Activated CD4-positive, alpha-beta memory T cell treated with anti-CD3 and anti-CD28 coated beads for 36 hours (primary cell): ENCODE measurements at regions of chr9 and their contacts with region 1.

Region 1: DNA sequence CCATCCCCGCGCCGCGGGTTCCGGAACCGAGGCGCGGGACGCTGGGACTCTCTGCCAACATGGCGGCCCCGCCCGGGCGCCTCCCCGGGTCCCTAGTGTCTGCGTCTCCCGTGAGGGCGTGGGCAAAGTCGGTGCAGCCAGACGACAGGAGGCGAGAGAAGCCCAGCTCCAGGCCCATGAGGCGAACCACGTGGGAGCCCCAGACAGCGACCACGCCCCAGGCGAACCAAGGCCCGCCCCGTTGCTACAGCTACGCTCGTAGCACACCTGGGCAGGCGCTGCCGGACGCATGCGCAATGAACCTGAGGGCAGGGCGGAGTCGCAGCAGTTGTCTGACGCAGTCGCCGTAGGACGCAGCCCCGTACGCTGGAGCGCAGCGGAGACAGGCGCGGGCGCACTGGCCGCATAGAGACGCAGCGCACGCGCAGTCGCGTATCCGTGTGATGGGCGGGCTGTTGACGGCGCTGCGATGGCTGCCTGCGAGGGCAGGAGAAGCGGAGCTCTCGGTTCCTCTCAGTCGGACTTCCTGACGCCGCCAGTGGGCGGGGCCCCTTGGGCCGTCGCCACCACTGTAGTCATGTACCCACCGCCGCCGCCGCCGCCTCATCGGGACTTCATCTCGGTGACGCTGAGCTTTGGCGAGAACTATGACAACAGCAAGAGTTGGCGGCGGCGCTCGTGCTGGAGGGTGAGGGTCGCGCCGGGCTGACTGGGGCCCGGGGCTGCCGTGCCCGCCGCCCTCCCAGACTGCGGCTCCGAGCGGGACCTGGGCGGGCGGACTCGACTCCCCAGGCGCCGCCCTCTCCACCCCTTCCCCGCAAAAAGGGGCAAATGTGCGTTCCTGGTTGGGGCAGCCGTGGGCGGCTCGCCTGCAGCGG is at the start of gene MAN1B1:
- DNase-seq: peak; percentile 100
- H3K4me3 Mint-ChIP-seq: peak within 1 kb of the TSS; percentile 88
- H3K27ac Mint-ChIP-seq: peak within 1 kb of the TSS; percentile 92
- H3K4me1 Mint-ChIP-seq: peaks cover 40% of the 10 kb centered on the region
- H3K27me3 Mint-ChIP-seq: no peaks in the 10 kb centered on the region
- total RNA-seq, gene MAN1B1: 32.9 to 33.1 TPM

Region 2: GRCh38 chr9:136885950-136886578 is 200.7 kb before region 1 on chr9 and contains the start of gene TRAF2:
- CTCF ChIA-PET with region 1: no interaction called
- POLR2A ChIA-PET with region 1: interaction called, 4 read pairs
- intact Hi-C with region 1: loop called (anchors 2 kb)
- DNase-seq: peak; percentile 99
- H3K4me3 Mint-ChIP-seq: peak within 1 kb of the TSS; percentile 91
- H3K27ac Mint-ChIP-seq: peak within 1 kb of the TSS; percentile 89
- H3K4me1 Mint-ChIP-seq: peaks cover 39% of the 10 kb centered on the region
- H3K27me3 Mint-ChIP-seq: no peaks in the 10 kb centered on the region
- total RNA-seq, gene TRAF2: 40.0 to 41.4 TPM

Region 3: DNA sequence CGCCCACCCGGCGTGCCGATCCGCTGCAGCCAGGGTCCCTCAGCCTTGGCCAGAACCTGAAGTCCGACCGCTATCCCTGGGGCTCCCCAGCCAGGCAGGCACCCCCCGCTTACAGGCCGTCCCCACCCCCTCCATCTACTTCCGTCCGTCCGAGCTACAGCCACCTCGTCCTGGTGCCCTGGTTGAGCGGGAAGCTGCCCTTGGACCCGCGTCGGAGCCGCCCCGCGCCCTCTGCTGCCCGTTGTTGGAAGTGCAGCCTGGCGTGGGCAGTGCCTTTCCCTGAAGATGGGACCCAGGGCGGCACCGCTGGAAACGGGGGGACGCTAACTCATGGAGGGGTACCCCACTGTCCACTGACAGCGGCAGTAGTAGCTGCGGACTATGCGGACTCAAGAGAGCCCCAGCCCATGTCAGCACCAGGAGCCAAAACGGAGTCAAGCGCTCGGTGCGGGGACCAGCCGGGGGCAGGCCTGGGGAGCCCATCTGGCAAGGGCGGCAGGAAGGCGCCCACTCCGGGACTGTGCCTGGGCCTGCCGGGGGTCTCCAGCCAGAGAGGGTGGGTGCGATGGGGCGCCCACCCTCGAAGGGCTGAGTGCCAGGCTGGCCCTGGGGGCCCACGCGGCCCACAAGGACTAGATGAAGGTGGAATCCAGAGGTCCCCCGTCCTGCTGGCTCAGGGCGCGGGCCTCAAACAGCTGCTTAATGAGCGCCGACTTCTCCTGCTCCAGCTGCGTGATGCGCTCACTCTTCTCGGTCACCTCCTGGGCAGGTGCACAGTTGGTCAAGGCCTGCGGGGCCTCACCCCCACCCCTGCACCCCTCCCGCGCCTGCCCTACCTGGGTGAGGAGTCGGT is 22.5 kb before region 1 on chr9:
- CTCF ChIA-PET with region 1: interaction called, 61 read pairs
- POLR2A ChIA-PET with region 1: interaction called, 27 read pairs
- intact Hi-C with region 1: no loop called
- DNase-seq: peak; percentile 68
- H3K4me3 Mint-ChIP-seq: no peak overlapping the region
- H3K27ac Mint-ChIP-seq: peak overlapping the region; percentile 44
- H3K4me1 Mint-ChIP-seq: peaks cover 4% of the 10 kb centered on the region
- H3K27me3 Mint-ChIP-seq: no peaks in the 10 kb centered on the region

Region 4: DNA sequence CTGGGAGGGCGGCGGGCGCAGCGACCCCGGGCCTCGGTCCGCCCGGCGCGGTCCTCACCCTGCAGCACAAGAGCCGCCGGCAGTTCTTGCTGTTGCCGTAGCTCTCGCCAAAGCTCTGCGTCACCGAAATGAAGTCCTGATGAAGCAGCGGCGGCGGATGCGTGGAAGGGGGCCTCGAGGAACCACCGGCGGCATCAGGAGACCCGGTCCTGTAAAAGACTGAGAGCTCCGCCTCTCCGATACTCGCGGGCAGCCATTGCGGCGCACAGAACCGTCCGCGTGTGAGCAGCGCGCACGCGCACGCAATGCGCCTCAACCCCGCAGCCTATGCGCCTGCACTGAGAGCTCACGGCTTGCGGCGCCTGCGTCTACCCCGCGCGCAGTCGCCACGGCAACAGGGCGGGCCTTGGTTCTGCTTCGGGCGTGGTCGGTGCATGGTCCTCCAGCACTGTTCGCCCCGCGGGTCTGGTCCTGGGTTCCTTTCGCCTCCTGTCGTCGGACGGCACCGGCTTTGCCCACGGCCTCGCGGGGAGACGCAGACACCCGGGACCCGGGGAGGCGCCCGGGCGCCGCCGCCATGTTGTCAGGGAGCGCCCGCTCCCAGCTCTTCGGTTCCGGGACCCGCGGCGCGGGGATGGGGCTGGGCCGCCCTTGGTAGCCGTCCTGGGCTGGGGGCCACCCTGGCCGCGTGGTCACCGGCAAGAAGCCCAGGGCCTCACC is 42.8 kb after region 1 on chr9:
- CTCF ChIA-PET with region 1: interaction called, 3 read pairs
- POLR2A ChIA-PET with region 1: interaction called, 12 read pairs
- intact Hi-C with region 1: loop called (anchors 1 kb)
- DNase-seq: peak; percentile 94
- H3K4me3 Mint-ChIP-seq: peak overlapping the region; percentile 84
- H3K27ac Mint-ChIP-seq: peak overlapping the region; percentile 70
- H3K4me1 Mint-ChIP-seq: peaks cover 20% of the 10 kb centered on the region
- H3K27me3 Mint-ChIP-seq: peaks cover 2% of the 10 kb centered on the region

Region 5: DNA sequence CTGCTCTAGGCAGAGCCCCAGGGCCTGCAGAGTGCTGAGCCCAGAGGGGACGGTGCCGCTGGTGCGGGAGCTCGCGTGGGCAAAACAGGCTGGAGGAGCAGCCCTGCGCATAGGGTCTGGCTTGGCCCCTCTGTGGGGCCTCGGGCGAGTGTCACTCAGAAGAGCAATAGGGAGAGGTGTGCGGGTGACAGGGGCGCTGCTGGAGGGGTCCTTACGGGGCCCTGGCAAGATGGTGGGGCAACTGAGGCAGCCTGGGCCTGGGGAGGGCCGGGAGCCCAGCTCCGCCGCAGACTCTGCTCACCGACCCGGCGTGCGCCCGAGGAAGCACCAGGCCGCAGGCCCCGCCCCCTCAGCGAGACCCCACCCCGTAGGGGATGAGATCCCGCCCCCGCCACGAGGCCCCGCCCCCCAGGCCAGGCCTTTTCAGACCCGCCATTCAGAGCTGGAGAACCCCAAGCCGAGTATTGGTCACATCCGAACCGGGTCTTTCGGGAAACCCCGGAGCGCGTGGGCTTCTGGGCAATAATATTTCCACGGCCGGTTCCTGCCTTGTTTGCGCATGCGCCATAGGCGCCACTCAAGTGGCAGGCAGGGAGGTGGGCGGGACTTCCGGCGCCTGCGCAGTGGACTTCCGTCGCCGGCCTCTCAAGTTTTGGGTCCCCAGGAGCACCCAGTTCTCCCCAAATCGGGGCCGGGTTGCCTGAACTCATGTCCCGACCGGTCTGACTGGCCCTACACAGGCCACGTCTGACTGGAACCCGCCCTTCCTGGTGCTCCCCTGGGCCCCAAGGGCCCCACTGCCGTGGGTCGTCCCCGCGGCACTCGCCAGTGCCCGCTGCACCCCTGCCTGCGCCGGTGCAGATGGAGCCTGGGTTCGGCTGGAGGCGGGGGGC is 136.6 kb after region 1 on chr9:
- CTCF ChIA-PET with region 1: interaction called, 3 read pairs
- POLR2A ChIA-PET with region 1: interaction called, 10 read pairs
- intact Hi-C with region 1: loop called (anchors 1 kb)
- DNase-seq: peak; percentile 99
- H3K4me3 Mint-ChIP-seq: peak overlapping the region; percentile 73
- H3K27ac Mint-ChIP-seq: peak overlapping the region; percentile 58
- H3K4me1 Mint-ChIP-seq: peaks cover 5% of the 10 kb centered on the region
- H3K27me3 Mint-ChIP-seq: peaks cover 2% of the 10 kb centered on the region